PC-9 (cell line): ENCODE measurements at regions of chr13 and their contacts with region 1.

Region 1: GRCh38 chr13:70634893-70635292 is 526.6 kb upstream of the KLHL1 start:
- DNase-seq: no peak
- H3K4me3 ChIP-seq: no peak overlapping the region
- H3K27ac ChIP-seq: no peak overlapping the region
- H3K4me1 ChIP-seq: no peaks in the 10 kb centered on the region
- H3K27me3 ChIP-seq: no peaks in the 10 kb centered on the region
- CTCF ChIP-seq: no peak

Region 2: DNA sequence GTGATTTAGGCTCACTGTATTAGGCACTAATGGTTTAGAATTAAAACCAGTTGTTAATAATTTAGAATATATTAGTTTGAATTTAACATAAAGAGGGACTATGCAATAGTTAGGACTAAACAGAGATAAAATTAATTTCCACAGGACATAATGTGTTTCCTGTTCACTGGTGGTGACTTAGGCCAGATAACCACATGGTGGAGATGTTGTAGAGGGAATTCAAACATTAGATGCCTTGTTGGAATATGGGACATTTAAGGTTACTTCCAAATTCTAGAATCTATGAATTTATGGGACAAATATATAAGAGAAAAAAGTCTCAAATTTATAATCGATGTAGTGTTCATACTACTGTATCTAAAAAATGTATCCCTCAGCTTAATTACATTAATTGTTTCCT is 88.8 kb after region 1 on chr13:
- CTCF ChIA-PET with region 1: interaction called, 11 read pairs
- POLR2A ChIA-PET with region 1: no interaction called
- intact Hi-C with region 1: no loop called
- DNase-seq: no peak
- H3K4me3 ChIP-seq: no peak overlapping the region
- H3K27ac ChIP-seq: no peak overlapping the region
- H3K4me1 ChIP-seq: no peaks in the 10 kb centered on the region
- H3K27me3 ChIP-seq: no peaks in the 10 kb centered on the region
- CTCF ChIP-seq: no peak